ENCODE measurements at regions of chr10 and their contacts with region 1.

Region 1: GRCh38 chr10:74262856-74263255 is 111.8 kb downstream of the ADK start:
- DNase-seq: no peak
- H3K4me3 ChIP-seq: no peak overlapping the region
- H3K27ac ChIP-seq: no peak overlapping the region
- H3K27me3 ChIP-seq: no peaks in the 10 kb centered on the region
- CTCF ChIP-seq: no peak

Region 2: DNA sequence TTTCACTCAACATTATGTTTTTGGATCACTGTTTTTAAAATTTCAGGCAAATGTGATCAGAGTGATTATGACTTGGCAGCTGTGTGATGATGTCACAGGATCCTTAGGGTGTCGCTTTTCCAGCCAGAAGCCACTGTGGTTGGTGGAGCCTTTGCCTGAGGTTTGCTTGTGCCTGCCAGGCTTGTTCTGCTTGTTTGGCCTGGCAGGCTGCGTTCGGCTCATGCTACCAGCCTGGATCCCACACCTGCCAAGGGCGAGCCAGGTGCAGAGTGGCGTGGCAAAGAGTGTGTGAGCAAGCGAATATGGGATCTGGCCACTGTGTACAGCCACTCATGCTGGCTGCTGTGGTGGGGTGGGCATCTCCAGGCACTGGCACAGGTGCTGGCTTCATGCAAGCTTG is 56.1 kb before region 1 on chr10:
- CTCF ChIA-PET with region 1: no interaction called
- POLR2A ChIA-PET with region 1: no interaction called
- DNase-seq: no peak
- H3K4me3 ChIP-seq: no peak overlapping the region
- H3K27ac ChIP-seq: no peak overlapping the region
- H3K27me3 ChIP-seq: no peaks in the 10 kb centered on the region
- CTCF ChIP-seq: no peak

Region 3: GRCh38 chr10:75019370-75019769 is 756.5 kb after region 1 on chr10:
- CTCF ChIA-PET with region 1: interaction called, 12 read pairs
- POLR2A ChIA-PET with region 1: no interaction called
- DNase-seq: no peak
- H3K4me3 ChIP-seq: no peak overlapping the region
- H3K27ac ChIP-seq: no peak overlapping the region
- H3K27me3 ChIP-seq: no peaks in the 10 kb centered on the region
- CTCF ChIP-seq: peak; percentile 29; the same call in 1 of the 2 replicates